ENCODE measurements at regions of chr1 and their contacts with region 1.

Region 1: DNA sequence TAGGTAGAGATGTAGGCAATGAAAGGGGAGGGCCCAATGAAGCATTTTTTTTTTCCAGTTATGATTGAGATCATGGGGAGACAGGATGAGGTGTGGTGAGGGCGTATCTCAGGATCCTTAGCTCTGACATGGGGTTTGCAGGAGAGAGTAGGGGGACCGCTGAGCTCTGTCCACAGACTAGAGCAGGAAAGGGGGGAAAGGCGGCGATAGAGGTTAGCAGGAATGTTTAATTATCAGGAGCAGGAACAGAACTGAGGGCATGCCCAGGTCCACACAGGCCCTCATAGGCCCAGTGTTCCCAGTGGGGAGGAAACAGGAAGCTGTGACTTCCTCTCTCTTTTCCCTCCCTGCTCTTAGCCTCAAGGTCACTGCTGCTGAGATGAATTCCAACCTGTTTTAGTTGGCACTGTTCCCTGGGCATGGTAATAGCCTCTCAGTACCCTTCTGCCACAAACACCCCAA is 876 bp upstream of the RXFP4 start:
- DNase-seq: no peak
- ATAC-seq: peak; percentile 84
- H3K4me3 ChIP-seq: peak overlapping the region; percentile 12
- H3K27ac ChIP-seq: peak overlapping the region; percentile 89
- H3K4me1 ChIP-seq: peaks cover 65% of the 10 kb centered on the region
- H3K27me3 ChIP-seq: no peaks in the 10 kb centered on the region
- CTCF ChIP-seq: no peak

Region 2: GRCh38 chr1:155989242-155990004 is 48.9 kb after region 1 on chr1:
- intact Hi-C with region 1: loop called (anchors 5 kb)
- DNase-seq: peak; percentile 85
- ATAC-seq: peak; percentile 94
- H3K4me3 ChIP-seq: peak overlapping the region; percentile 41
- H3K27ac ChIP-seq: peak overlapping the region; percentile 47
- H3K4me1 ChIP-seq: peaks cover 24% of the 10 kb centered on the region
- H3K27me3 ChIP-seq: no peaks in the 10 kb centered on the region
- CTCF ChIP-seq: peak; percentile 99

Measured in upper lobe of right lung (tissue), 1 donor.